Caco-2 (cell line): ENCODE measurements at regions of chr7 and their contacts with region 1.

Region 1: GRCh38 chr7:41169317-41169716 is 533.6 kb downstream of the INHBA start:
- DNase-seq: no peak
- H3K4me3 ChIP-seq: no peak overlapping the region
- H3K4me3 Mint-ChIP-seq: no peak overlapping the region
- H3K27ac Mint-ChIP-seq: no peak overlapping the region
- H3K4me1 ChIP-seq: no peaks in the 10 kb centered on the region
- H3K4me1 Mint-ChIP-seq: no peaks in the 10 kb centered on the region
- H3K27me3 ChIP-seq: no peaks in the 10 kb centered on the region
- H3K27me3 Mint-ChIP-seq: no peaks in the 10 kb centered on the region
- CTCF ChIP-seq: no peak

Region 2: DNA sequence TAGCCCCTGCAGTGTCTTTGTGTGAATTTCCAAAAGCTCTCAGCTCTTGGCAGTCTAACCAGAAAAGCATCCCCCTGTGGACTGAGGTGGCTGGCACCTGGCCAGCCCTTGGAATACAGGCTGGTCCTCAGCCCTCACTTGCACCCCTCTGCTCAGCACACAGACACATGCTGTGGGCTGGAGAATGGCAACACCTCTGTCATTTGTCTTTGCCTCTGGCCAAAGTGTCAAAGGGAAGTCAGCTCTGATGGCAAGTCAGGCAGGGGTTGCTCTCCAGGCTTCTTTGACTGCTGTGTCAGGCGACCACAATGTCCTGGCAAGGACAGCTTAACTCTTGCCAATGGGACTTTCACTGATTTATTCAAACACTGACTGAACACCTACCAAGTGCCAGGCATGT is 191.3 kb before region 1 on chr7:
- CTCF ChIA-PET with region 1: no interaction called
- POLR2A ChIA-PET with region 1: no interaction called
- intact Hi-C with region 1: no loop called
- DNase-seq: no peak
- H3K4me3 ChIP-seq: no peak overlapping the region
- H3K4me3 Mint-ChIP-seq: no peak overlapping the region
- H3K27ac Mint-ChIP-seq: no peak overlapping the region
- H3K4me1 ChIP-seq: no peaks in the 10 kb centered on the region
- H3K4me1 Mint-ChIP-seq: no peaks in the 10 kb centered on the region
- H3K27me3 ChIP-seq: no peaks in the 10 kb centered on the region
- H3K27me3 Mint-ChIP-seq: no peaks in the 10 kb centered on the region
- CTCF ChIP-seq: no peak

Region 3: DNA sequence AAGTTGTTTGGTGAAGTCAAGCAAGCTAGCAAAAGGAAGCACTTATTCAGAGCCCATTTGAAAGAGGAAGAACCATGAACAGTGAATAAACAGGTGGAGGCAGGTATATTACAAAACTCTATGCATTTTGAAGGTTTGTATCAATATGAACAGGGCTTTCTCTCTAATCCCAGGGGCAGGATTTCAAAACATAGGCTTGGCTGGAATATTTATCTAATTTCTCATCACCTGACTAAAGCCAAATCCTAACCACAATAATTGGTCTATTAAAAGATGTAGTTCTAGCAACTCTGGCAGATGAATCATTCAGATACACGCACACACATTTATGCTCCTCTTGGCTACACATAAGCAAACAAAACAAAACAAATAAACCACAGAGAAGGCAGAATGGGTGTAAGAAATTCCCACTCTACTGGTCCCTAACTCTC is 20.8 kb before region 1 on chr7:
- CTCF ChIA-PET with region 1: no interaction called
- POLR2A ChIA-PET with region 1: no interaction called
- intact Hi-C with region 1: loop called (anchors 2 kb)
- DNase-seq: no peak
- H3K4me3 ChIP-seq: no peak overlapping the region
- H3K4me3 Mint-ChIP-seq: no peak overlapping the region
- H3K27ac Mint-ChIP-seq: no peak overlapping the region
- H3K4me1 ChIP-seq: no peaks in the 10 kb centered on the region
- H3K4me1 Mint-ChIP-seq: peaks cover 6% of the 10 kb centered on the region
- H3K27me3 ChIP-seq: no peaks in the 10 kb centered on the region
- H3K27me3 Mint-ChIP-seq: no peaks in the 10 kb centered on the region
- CTCF ChIP-seq: no peak

Region 4: DNA sequence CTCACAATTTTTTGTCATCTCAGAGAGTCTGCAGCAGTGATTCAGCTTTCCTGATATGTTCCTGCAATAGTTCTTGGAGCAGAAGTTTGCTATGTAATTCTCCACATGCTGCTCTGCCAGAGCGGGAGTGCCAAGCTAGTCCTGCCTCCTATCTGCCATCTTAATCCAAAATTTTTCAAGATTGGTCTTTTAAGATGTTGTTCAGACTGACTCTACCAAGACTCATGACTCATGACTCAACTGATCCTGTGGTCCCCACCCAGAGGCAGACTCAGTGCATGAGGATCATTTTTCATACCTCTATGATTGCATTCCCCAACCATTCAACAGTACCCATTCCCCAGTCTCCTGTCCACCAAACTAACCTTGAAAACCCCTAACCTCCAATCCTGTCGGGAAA is 62.8 kb after region 1 on chr7:
- CTCF ChIA-PET with region 1: no interaction called
- POLR2A ChIA-PET with region 1: no interaction called
- intact Hi-C with region 1: no loop called
- DNase-seq: no peak
- H3K4me3 ChIP-seq: no peak overlapping the region
- H3K4me3 Mint-ChIP-seq: no peak overlapping the region
- H3K27ac Mint-ChIP-seq: peak overlapping the region; percentile 57
- H3K4me1 ChIP-seq: peaks cover 25% of the 10 kb centered on the region
- H3K4me1 Mint-ChIP-seq: peaks cover 19% of the 10 kb centered on the region
- H3K27me3 ChIP-seq: no peaks in the 10 kb centered on the region
- H3K27me3 Mint-ChIP-seq: no peaks in the 10 kb centered on the region
- CTCF ChIP-seq: no peak

Region 5: GRCh38 chr7:41333511-41333910 is 164.2 kb after region 1 on chr7:
- CTCF ChIA-PET with region 1: no interaction called
- POLR2A ChIA-PET with region 1: no interaction called
- intact Hi-C with region 1: no loop called
- DNase-seq: no peak
- H3K4me3 ChIP-seq: no peak overlapping the region
- H3K4me3 Mint-ChIP-seq: no peak overlapping the region
- H3K27ac Mint-ChIP-seq: no peak overlapping the region
- H3K4me1 ChIP-seq: no peaks in the 10 kb centered on the region
- H3K4me1 Mint-ChIP-seq: no peaks in the 10 kb centered on the region
- H3K27me3 ChIP-seq: no peaks in the 10 kb centered on the region
- H3K27me3 Mint-ChIP-seq: no peaks in the 10 kb centered on the region
- CTCF ChIP-seq: no peak